ENCODE measurements at regions of chr14 and their contacts with region 1.

Region 1: GRCh38 chr14:73458151-73458976 is at the start of gene NUMB:
- DNase-seq: peak; percentile 100
- ATAC-seq: peak; percentile 94
- H3K4me3 ChIP-seq: peak within 1 kb of the TSS; percentile 97
- H3K27ac ChIP-seq: peak within 1 kb of the TSS; percentile 71
- H3K4me1 ChIP-seq: peaks cover 4% of the 10 kb centered on the region; the same call in 1 of the 2 replicates
- H3K27me3 ChIP-seq: no peaks in the 10 kb centered on the region
- CTCF ChIP-seq: 0 out of 6 replicates have a peak, but pooled peaks of 1 of the 3 experiments have one; percentile 7
- EP300 ChIP-seq: no peak
- POLR2A ChIP-seq: peak; percentile 94
- RAD21 ChIP-seq: no peak
- polyA plus RNA-seq, gene NUMB: 29.8 to 30.9 TPM

Region 2: GRCh38 chr14:73245401-73246325 is 212.7 kb before region 1 on chr14:
- CTCF ChIA-PET with region 1: interaction called, 3 read pairs
- POLR2A ChIA-PET with region 1: interaction called, 5 read pairs
- RAD21 ChIA-PET with region 1: interaction called, 3 read pairs
- SMC1A ChIA-PET with region 1: interaction called, 3 read pairs
- in situ Hi-C with region 1: no loop called
- intact Hi-C with region 1: loop called (anchors 5 kb)
- DNase-seq: no peak
- ATAC-seq: peak; percentile 71
- H3K4me3 ChIP-seq: peak overlapping the region; percentile 66
- H3K27ac ChIP-seq: peak overlapping the region; percentile 15
- H3K4me1 ChIP-seq: peaks cover 58% of the 10 kb centered on the region
- H3K27me3 ChIP-seq: no peaks in the 10 kb centered on the region
- CTCF ChIP-seq: no peak
- EP300 ChIP-seq: no peak
- POLR2A ChIP-seq: peak; percentile 71
- RAD21 ChIP-seq: no peak

Region 3: GRCh38 chr14:73305499-73305898 is 152.9 kb before region 1 on chr14:
- CTCF ChIA-PET with region 1: interaction called, 3 read pairs
- POLR2A ChIA-PET with region 1: interaction called, 22 read pairs
- RAD21 ChIA-PET with region 1: interaction called, 9 read pairs
- SMC1A ChIA-PET with region 1: interaction called, 7 read pairs
- in situ Hi-C with region 1: no loop called
- intact Hi-C with region 1: no loop called
- DNase-seq: no peak
- ATAC-seq: no peak
- H3K4me3 ChIP-seq: no peak overlapping the region
- H3K27ac ChIP-seq: no peak overlapping the region
- H3K4me1 ChIP-seq: peaks cover 19% of the 10 kb centered on the region
- H3K27me3 ChIP-seq: no peaks in the 10 kb centered on the region
- CTCF ChIP-seq: no peak
- EP300 ChIP-seq: no peak
- POLR2A ChIP-seq: no peak
- RAD21 ChIP-seq: no peak

Region 4: GRCh38 chr14:73418227-73418626 is 40.1 kb before region 1 on chr14:
- CTCF ChIA-PET with region 1: interaction called, 12 read pairs
- POLR2A ChIA-PET with region 1: interaction called, 13 read pairs
- RAD21 ChIA-PET with region 1: interaction called, 40 read pairs
- SMC1A ChIA-PET with region 1: interaction called, 34 read pairs
- in situ Hi-C with region 1: no loop called
- intact Hi-C with region 1: loop called (anchors 5 kb)
- DNase-seq: no peak
- ATAC-seq: no peak
- H3K4me3 ChIP-seq: no peak overlapping the region
- H3K27ac ChIP-seq: no peak overlapping the region
- H3K4me1 ChIP-seq: peaks cover 19% of the 10 kb centered on the region
- H3K27me3 ChIP-seq: no peaks in the 10 kb centered on the region
- CTCF ChIP-seq: no peak
- EP300 ChIP-seq: no peak
- POLR2A ChIP-seq: no peak
- RAD21 ChIP-seq: no peak

Measured in GM12878 (cell line).